ENCODE measurements at regions of chr15 and their contacts with region 1.

Region 1: DNA sequence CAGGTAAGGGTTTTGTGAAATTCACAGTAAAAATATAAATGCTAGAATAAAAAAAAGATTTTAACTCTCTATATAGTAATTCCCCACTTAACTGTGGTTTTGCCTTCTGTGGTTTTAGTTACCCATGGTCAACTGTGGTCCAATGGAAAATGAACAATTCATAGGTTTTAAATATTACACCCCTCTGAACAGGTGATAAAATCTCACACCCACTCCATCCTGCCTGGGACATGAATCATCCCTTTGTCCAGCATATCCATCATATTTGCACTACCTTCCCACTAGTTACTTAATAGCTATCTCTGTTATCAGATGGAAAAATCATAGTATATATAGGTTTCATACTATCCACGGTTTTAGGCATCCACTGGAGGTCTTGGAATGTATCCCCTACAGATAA is 49.2 kb downstream of the HDGFL3 start:
- DNase-seq: peak; percentile 27
- ATAC-seq: peak; percentile 24
- H3K4me3 Mint-ChIP-seq: no peak overlapping the region
- H3K27ac Mint-ChIP-seq: no peak overlapping the region
- H3K4me1 Mint-ChIP-seq: peaks cover 24% of the 10 kb centered on the region
- H3K27me3 Mint-ChIP-seq: no peaks in the 10 kb centered on the region
- CTCF ChIP-seq: no peak

Region 2: GRCh38 chr15:83108266-83109226 is 49.9 kb before region 1 on chr15:
- CTCF ChIA-PET with region 1: no interaction called
- POLR2A ChIA-PET with region 1: no interaction called
- intact Hi-C with region 1: no loop called
- DNase-seq: peak; percentile 59
- ATAC-seq: peak; percentile 76
- H3K4me3 Mint-ChIP-seq: peak overlapping the region; percentile 81
- H3K27ac Mint-ChIP-seq: peak overlapping the region; percentile 68
- H3K4me1 Mint-ChIP-seq: peaks cover 17% of the 10 kb centered on the region
- H3K27me3 Mint-ChIP-seq: peaks cover 48% of the 10 kb centered on the region
- CTCF ChIP-seq: no peak

Region 3: GRCh38 chr15:83144189-83144588 is 14.2 kb before region 1 on chr15:
- CTCF ChIA-PET with region 1: no interaction called
- POLR2A ChIA-PET with region 1: no interaction called
- intact Hi-C with region 1: no loop called
- DNase-seq: no peak
- ATAC-seq: no peak
- H3K4me3 Mint-ChIP-seq: no peak overlapping the region
- H3K27ac Mint-ChIP-seq: no peak overlapping the region
- H3K4me1 Mint-ChIP-seq: no peaks in the 10 kb centered on the region
- H3K27me3 Mint-ChIP-seq: no peaks in the 10 kb centered on the region
- CTCF ChIP-seq: no peak

Region 4: DNA sequence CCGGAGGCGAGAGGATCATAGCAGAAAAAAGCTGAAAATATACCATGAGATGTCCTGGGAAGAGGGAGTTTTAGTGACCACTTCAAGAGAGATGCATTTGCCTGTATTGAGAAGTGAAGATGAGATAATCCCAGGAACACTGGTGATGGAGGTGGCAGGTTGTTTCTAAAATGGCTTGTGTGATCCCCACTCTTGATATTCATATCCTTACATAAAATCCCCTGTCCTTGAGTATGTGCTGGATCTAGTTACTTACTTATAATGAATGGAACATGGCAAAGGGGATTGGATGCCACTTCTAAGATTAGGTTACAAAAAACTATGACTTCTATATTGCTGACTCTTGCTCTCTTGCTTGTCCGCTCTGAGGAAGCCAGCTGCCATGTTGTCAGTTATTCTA is 27.2 kb after region 1 on chr15:
- CTCF ChIA-PET with region 1: no interaction called
- POLR2A ChIA-PET with region 1: no interaction called
- intact Hi-C with region 1: no loop called
- DNase-seq: no peak
- ATAC-seq: no peak
- H3K4me3 Mint-ChIP-seq: no peak overlapping the region
- H3K27ac Mint-ChIP-seq: no peak overlapping the region
- H3K4me1 Mint-ChIP-seq: no peaks in the 10 kb centered on the region
- H3K27me3 Mint-ChIP-seq: no peaks in the 10 kb centered on the region
- CTCF ChIP-seq: no peak

Region 5: GRCh38 chr15:83199288-83199687 is 40.9 kb after region 1 on chr15:
- CTCF ChIA-PET with region 1: interaction called, 3 read pairs
- POLR2A ChIA-PET with region 1: no interaction called
- intact Hi-C with region 1: loop called (anchors 2 kb)
- DNase-seq: peak; percentile 65
- ATAC-seq: peak; percentile 86
- H3K4me3 Mint-ChIP-seq: peak overlapping the region; percentile 6
- H3K27ac Mint-ChIP-seq: peak overlapping the region; percentile 88
- H3K4me1 Mint-ChIP-seq: peaks cover 48% of the 10 kb centered on the region
- H3K27me3 Mint-ChIP-seq: peaks cover 17% of the 10 kb centered on the region
- CTCF ChIP-seq: no peak

Measured in activated CD8-positive, alpha-beta T cell treated with anti-CD3 and anti-CD28 coated beads for 36 hours (primary cell).